ENCODE measurements at regions of chr6 and their contacts with region 1.

Region 1: DNA sequence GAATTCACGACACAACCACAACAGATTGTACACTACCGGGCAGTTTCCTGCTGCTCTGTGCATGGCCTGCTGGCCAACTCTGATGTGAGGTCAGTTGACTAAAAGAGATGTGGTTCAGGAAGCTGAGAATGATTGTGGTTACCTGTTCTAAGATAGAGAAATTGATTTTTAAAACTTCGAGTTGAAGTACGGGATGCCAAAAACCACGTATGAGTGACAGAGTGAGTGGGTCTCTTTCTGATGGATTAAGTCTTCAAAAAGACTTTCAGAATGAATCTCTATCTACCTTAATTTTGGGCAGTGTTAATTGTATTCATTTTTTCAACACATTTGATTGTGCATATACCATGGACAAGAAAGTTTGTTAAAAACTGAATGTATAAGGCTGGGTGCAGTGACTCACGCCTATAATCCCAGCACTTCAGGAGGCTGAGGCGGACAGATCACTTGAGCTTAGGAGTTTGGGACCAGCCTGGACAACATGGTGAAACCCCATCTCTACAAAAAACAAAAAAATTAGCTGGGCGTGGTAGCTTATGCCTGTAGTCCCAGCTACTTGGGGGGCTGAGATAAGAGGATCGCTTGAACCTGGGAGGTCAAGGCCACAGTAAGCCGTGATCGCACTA is 121.2 kb downstream of the SGK1 start:
- DNase-seq: no peak
- H3K4me3 ChIP-seq: no peak overlapping the region
- H3K27ac ChIP-seq: no peak overlapping the region
- H3K4me1 ChIP-seq: peaks cover 10% of the 10 kb centered on the region
- CTCF ChIP-seq: no peak

Region 2: DNA sequence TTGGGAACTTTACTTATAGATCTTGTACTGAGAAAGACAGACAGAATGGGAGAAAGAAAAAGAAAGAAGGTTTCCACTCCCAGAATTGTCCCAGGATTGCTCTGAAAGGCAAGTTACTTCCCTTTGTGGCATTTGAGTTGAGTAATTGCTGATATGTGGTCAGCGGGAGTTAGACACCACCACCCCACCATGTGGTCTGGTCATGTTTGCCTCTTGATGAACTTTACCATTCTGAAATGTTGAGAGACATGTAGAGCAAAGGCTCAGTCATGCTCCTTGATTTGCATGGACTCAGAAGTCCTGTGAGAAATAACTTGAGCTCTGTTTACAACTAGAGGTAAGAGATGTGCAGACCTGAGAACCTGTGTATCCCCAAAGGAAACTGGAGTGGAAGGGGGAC is 290.6 kb before region 1 on chr6:
- CTCF ChIA-PET with region 1: no interaction called
- POLR2A ChIA-PET with region 1: no interaction called
- intact Hi-C with region 1: no loop called
- DNase-seq: no peak
- H3K4me3 ChIP-seq: no peak overlapping the region
- H3K27ac ChIP-seq: no peak overlapping the region
- H3K4me1 ChIP-seq: no peaks in the 10 kb centered on the region
- CTCF ChIP-seq: no peak

Region 3: GRCh38 chr6:134207421-134207820 is 10.7 kb after region 1 on chr6:
- CTCF ChIA-PET with region 1: no interaction called
- POLR2A ChIA-PET with region 1: interaction called, 13 read pairs
- intact Hi-C with region 1: no loop called
- DNase-seq: no peak
- H3K4me3 ChIP-seq: no peak overlapping the region
- H3K27ac ChIP-seq: no peak overlapping the region
- H3K4me1 ChIP-seq: no peaks in the 10 kb centered on the region
- CTCF ChIP-seq: no peak

Region 4: DNA sequence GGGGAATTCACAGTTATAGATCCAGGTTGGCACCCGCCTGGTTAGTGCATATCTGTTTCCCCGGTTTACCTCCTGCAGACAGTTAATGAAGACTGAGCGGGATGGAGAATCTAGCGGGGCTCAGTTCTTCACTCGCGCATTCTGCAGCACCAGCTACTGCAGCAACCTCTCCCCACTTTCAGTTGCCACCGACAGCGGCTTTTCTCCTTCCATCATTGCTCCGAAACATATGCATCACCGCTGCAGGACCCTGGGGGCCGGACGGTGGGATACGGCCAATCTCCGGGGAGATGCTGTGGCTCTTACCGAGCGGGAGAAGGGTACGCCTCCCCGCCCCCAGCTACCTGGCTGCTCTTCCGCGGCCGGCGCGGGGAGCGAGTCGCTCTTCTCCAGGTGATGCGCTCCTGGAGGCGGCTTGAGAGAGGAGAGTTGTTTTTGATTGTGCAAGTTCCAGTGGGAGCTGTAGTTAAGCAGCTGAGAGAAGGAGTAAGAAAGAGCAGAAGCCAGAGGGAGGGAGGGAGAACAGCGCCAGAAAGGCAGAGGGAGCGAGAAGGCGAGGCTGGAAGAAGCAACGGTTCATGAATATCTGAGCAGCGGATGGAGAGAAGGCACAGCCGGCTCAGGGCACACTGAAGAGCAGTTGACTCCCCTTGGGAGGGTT is 120.9 kb after region 1 on chr6 and contains the start of gene SGK1:
- CTCF ChIA-PET with region 1: no interaction called
- POLR2A ChIA-PET with region 1: interaction called, 13 read pairs
- intact Hi-C with region 1: no loop called
- DNase-seq: no peak
- H3K4me3 ChIP-seq: peak within 1 kb of the TSS; percentile 48
- H3K27ac ChIP-seq: no peak within 1 kb of the TSS
- H3K4me1 ChIP-seq: no peaks in the 10 kb centered on the region
- CTCF ChIP-seq: no peak
- total RNA-seq, gene SGK1: 26.6 and 27.6 TPM in 2 replicates

Measured in OCI-LY7 (cell line).